ENCODE measurements at regions of chr7 and their contacts with region 1.

Region 1: DNA sequence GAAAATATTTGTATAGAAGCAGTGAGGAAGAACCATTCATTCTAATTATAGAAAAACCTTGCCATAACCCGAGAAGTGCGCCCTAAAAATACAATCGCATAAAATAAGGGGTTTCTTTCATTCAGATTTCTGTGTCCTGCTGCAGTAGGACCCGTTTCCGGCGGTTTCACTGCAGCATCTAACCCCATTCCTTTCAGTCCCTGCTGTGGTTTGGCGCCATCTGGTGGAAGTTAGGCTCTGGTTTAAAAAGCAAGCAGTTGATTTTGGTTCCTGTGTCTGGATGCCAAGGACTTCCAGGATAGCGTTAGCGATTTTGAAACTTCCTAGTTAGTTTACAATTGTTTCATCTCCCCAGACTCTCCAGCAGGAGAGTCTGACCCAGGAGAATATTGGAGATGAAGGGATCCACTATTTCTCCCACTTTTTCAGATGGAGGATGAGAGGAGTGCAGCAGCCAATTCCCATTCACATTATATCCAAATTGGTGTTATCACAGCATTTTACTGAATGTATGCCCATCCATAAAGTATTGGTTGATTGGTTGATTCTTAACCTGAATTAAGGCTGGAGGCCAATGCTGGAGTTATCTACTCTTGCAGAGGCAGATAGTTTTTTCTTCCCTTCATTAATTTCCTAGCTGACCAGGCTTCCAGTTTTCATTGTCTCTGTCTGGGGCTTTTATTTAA is 128.8 kb upstream of the CACNA2D1 start:
- DNase-seq: peak; percentile 84

Region 2: GRCh38 chr7:81482600-81483186 is 1089.6 kb before region 1 on chr7:
- intact Hi-C with region 1: loop called (anchors 10 kb)
- DNase-seq: no peak

Region 3: GRCh38 chr7:82044497-82045080 is 527.7 kb before region 1 on chr7:
- intact Hi-C with region 1: loop called (anchors 2 kb)
- DNase-seq: no peak

Region 4: GRCh38 chr7:82234457-82235049 is 337.8 kb before region 1 on chr7:
- intact Hi-C with region 1: loop called (anchors 10 kb)
- DNase-seq: no peak

Region 5: DNA sequence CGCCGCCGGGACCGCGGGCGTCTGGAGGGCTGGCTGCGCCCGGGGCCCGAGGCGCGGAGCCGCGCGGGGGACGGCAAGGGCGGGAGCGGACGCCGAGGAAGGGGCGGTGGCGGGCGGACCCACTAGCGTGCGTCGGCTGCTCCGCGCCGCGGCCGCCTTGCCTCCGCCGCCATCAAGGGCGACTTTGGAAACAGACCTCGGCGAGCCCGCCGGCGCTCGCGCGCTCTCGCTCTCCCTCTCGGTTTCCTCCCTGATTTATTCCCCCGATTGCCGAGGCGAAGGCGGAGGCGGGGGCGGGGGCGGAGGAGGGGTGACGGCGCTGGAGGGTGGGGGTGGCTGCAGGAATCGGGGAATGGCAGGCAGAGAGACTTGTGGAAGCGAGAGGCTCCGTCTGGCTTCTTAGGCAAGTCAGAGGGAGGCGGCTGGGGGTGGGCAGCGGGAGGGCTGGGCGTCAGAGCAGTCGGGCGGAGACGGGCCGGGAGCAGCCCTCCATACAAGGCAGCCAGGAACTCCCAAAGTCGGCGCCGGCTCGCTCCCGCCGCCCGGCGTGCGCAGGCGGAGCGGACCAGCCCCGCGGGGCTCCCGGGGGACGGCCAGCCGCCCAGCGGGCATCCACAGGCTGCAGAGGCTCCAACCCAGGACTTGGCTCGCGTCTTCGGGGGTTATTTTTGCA is 128.7 kb before region 1 on chr7 and contains the start of gene CACNA2D1:
- intact Hi-C with region 1: loop called (anchors 10 kb)
- DNase-seq: peak; percentile 89
- total RNA-seq, gene CACNA2D1: 87.3 TPM

Measured in cardiac septum (tissue), 1 donor.